ENCODE measurements at regions of chr15 and their contacts with region 1.

Region 1: DNA sequence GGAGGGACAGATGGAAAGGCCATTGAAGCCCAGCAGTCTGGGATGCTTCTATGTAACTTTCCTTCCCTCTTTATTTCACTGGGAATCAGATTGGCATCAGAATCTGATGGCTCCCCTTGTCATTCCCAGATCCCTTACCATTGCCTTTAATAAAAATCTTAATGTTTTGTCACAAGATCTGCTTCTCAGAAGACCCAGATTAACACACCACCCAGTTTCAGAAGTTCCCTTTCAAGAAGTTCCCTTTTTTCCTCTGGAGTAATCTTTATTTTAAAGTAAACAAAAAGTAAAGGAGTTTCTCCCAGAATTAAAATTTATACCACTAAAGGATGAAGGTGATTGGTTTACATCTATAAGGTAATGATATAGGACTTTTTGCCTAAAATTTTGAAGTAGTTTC is 76.4 kb downstream of the UBR1 start:
- DNase-seq: no peak
- ATAC-seq: no peak
- H3K4me3 ChIP-seq: no peak overlapping the region
- H3K27ac ChIP-seq: no peak overlapping the region
- H3K4me1 ChIP-seq: no peaks in the 10 kb centered on the region
- H3K27me3 ChIP-seq: no peaks in the 10 kb centered on the region
- CTCF ChIP-seq: no peak

Region 2: GRCh38 chr15:42955518-42955917 is 74.0 kb before region 1 on chr15:
- intact Hi-C with region 1: no loop called
- DNase-seq: no peak
- ATAC-seq: no peak
- H3K4me3 ChIP-seq: no peak overlapping the region
- H3K27ac ChIP-seq: no peak overlapping the region
- H3K4me1 ChIP-seq: no peaks in the 10 kb centered on the region
- H3K27me3 ChIP-seq: no peaks in the 10 kb centered on the region
- CTCF ChIP-seq: no peak

Region 3: GRCh38 chr15:42994546-42994945 is 34.9 kb before region 1 on chr15:
- intact Hi-C with region 1: no loop called
- DNase-seq: no peak
- ATAC-seq: no peak
- H3K4me3 ChIP-seq: no peak overlapping the region
- H3K27ac ChIP-seq: no peak overlapping the region
- H3K4me1 ChIP-seq: no peaks in the 10 kb centered on the region
- H3K27me3 ChIP-seq: no peaks in the 10 kb centered on the region
- CTCF ChIP-seq: no peak

Region 4: DNA sequence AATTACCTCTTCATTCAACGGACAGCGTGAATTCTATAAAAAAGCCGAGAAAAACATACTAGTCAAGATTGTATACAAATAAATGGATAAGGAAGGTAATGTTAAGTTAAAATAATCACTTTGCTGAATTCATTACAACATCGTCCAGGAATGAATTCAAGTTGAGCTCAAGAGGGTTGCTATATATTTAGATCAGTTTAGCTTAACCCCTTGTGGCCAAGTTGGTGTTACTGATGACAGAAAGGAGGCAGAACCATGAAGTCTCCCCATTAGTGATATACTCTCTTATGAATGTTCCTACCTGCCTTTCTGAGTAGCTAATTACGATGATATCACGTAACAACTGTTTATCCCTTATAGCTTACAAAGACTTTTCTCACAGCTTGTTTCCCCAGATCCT is 41.4 kb after region 1 on chr15:
- intact Hi-C with region 1: loop called in 1 of 2 experiments (anchors 10 kb)
- DNase-seq: no peak
- ATAC-seq: no peak
- H3K4me3 ChIP-seq: no peak overlapping the region
- H3K27ac ChIP-seq: no peak overlapping the region
- H3K4me1 ChIP-seq: no peaks in the 10 kb centered on the region
- H3K27me3 ChIP-seq: no peaks in the 10 kb centered on the region
- CTCF ChIP-seq: no peak

Region 5: DNA sequence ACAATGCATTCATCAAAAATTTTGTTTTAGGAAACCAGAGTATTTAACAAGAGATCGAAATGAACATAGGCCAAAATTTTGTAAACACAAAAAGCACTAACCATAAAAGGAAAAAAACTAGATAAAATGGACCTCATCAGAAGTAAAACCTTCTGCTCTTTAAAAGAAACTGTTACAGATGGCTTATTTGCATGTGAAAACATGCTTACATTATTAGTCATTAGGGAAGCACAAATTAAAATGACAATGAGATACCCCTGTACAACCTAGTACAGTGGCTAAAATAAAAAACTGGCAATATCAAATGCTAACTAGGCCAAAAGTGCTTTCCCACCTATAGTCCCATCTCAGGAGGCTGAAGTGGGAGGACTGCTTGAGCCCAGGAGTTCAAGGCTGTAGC is 57.1 kb after region 1 on chr15:
- intact Hi-C with region 1: loop called in 1 of 2 experiments (anchors 10 kb)
- DNase-seq: no peak
- ATAC-seq: no peak
- H3K4me3 ChIP-seq: no peak overlapping the region
- H3K27ac ChIP-seq: no peak overlapping the region
- H3K4me1 ChIP-seq: no peaks in the 10 kb centered on the region
- H3K27me3 ChIP-seq: no peaks in the 10 kb centered on the region
- CTCF ChIP-seq: no peak

Region 6: GRCh38 chr15:43106486-43106829 is 77.0 kb after region 1 on chr15:
- intact Hi-C with region 1: no loop called
- DNase-seq: no peak
- ATAC-seq: no peak
- H3K4me3 ChIP-seq: peak overlapping the region; percentile 93
- H3K27ac ChIP-seq: peak overlapping the region; percentile 94
- H3K4me1 ChIP-seq: peaks cover 35% of the 10 kb centered on the region
- H3K27me3 ChIP-seq: no peaks in the 10 kb centered on the region
- CTCF ChIP-seq: no peak

Region 7: DNA sequence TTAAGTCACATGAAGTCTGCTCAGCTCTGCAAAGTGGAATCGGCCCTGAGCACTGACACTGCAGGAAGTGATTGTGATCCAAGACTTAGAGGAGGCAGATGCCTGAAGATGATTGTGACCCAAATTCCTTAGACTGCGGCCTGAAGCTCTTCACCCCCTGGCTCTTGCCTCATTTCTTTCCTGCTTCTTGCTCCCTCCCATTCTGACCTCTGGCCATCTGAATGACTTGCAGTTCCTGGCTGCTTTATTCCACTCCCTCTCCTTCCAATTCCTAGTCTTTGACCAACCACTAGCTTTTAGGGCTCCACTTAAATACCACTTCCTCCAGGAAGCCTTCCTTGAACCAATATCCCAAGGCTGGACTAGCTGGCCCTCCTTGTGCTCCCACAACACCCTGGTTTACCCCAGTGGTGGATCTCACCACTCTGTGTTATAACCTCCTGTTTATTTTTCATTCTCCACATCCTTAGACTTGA is 201.2 kb after region 1 on chr15:
- intact Hi-C with region 1: no loop called
- DNase-seq: peak in 1 of 2 donors; percentile 23
- ATAC-seq: peak; percentile 57 to 78 (median 73)
- H3K4me3 ChIP-seq: no peak overlapping the region
- H3K27ac ChIP-seq: peak overlapping the region; percentile 38
- H3K4me1 ChIP-seq: peaks cover 12% of the 10 kb centered on the region
- H3K27me3 ChIP-seq: no peaks in the 10 kb centered on the region
- CTCF ChIP-seq: no peak

Measured in psoas muscle (tissue), 8 donors.